Mammary epithelial cell (primary cell): ENCODE measurements at regions of chr1 and their contacts with region 1.

Region 1: GRCh38 chr1:167152192-167152876 is 58.5 kb downstream of the STYXL2 start:
- DNase-seq: peak; percentile 77
- H3K4me3 ChIP-seq: peak overlapping the region in 2 of 3 experiments; percentile 8 to 15
- H3K27ac ChIP-seq: peak overlapping the region; percentile 33
- H3K4me1 ChIP-seq: peaks cover 18% of the 10 kb centered on the region
- H3K27me3 ChIP-seq: no peaks in the 10 kb centered on the region
- CTCF ChIP-seq: no peak

Region 2: GRCh38 chr1:166391279-166392066 is 760.9 kb before region 1 on chr1:
- CTCF ChIA-PET with region 1: no interaction called
- dilution Hi-C with region 1: no loop called
- in situ Hi-C with region 1: no loop called
- intact Hi-C with region 1: no loop called
- DNase-seq: peak; percentile 4
- H3K4me3 ChIP-seq: no peak overlapping the region
- H3K27ac ChIP-seq: no peak overlapping the region
- H3K4me1 ChIP-seq: no peaks in the 10 kb centered on the region
- H3K27me3 ChIP-seq: no peaks in the 10 kb centered on the region
- CTCF ChIP-seq: no peak

Region 3: DNA sequence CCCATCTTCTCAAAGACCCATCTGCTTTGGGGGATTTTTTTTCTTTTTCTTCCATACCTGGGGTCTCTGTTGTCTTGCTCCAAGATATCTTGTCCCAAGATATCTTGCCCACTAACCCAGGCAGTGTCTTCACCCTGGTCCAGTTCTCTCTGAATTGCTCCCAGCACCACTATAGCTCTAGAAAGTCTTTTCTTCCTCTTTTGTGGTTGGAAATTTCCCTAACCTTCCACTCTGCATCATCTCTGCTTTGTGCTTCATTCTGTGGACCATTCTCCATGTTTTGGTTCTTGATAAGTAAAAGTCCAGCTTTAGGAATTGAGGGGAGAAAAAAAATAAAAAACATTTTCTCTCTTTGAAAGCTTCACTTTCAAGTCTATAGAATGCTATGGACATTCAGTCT is 37.6 kb before region 1 on chr1:
- CTCF ChIA-PET with region 1: no interaction called
- dilution Hi-C with region 1: loop called (anchors 5 kb)
- in situ Hi-C with region 1: no loop called
- intact Hi-C with region 1: no loop called
- DNase-seq: no peak
- H3K4me3 ChIP-seq: no peak overlapping the region
- H3K27ac ChIP-seq: no peak overlapping the region
- H3K4me1 ChIP-seq: peaks cover 11% of the 10 kb centered on the region
- H3K27me3 ChIP-seq: no peaks in the 10 kb centered on the region
- CTCF ChIP-seq: no peak

Region 4: GRCh38 chr1:167185974-167186657 is 33.8 kb after region 1 on chr1:
- CTCF ChIA-PET with region 1: no interaction called
- dilution Hi-C with region 1: no loop called
- in situ Hi-C with region 1: no loop called
- intact Hi-C with region 1: no loop called
- DNase-seq: no peak
- H3K4me3 ChIP-seq: no peak overlapping the region
- H3K27ac ChIP-seq: no peak overlapping the region
- H3K4me1 ChIP-seq: no peaks in the 10 kb centered on the region
- H3K27me3 ChIP-seq: no peaks in the 10 kb centered on the region
- CTCF ChIP-seq: no peak